ENCODE measurements at regions of chr21 and their contacts with region 1.

Region 1: GRCh38 chr21:36149788-36150711 is 6.6 kb upstream of the DOP1B start:
- DNase-seq: no peak
- ATAC-seq: peak; percentile 77
- H3K4me3 ChIP-seq: no peak overlapping the region
- H3K4me3 Mint-ChIP-seq: peak overlapping the region in 7 of 10 donors; percentile 26 to 75 (median 64)
- H3K27ac ChIP-seq: peak overlapping the region; percentile 18
- H3K27ac Mint-ChIP-seq: peak overlapping the region; percentile 40 to 91 (median 84)
- H3K4me1 ChIP-seq: peaks cover 18 to 35% of the 10 kb centered on the region in 2 donors
- H3K4me1 Mint-ChIP-seq: peaks cover 21 to 59% (median 51%) of the 10 kb centered on the region in 7 donors
- H3K27me3 ChIP-seq: no peaks in the 10 kb centered on the region
- H3K27me3 Mint-ChIP-seq: peaks cover 0 to 7% (median 0%) of the 10 kb centered on the region in 5 donors

Region 2: DNA sequence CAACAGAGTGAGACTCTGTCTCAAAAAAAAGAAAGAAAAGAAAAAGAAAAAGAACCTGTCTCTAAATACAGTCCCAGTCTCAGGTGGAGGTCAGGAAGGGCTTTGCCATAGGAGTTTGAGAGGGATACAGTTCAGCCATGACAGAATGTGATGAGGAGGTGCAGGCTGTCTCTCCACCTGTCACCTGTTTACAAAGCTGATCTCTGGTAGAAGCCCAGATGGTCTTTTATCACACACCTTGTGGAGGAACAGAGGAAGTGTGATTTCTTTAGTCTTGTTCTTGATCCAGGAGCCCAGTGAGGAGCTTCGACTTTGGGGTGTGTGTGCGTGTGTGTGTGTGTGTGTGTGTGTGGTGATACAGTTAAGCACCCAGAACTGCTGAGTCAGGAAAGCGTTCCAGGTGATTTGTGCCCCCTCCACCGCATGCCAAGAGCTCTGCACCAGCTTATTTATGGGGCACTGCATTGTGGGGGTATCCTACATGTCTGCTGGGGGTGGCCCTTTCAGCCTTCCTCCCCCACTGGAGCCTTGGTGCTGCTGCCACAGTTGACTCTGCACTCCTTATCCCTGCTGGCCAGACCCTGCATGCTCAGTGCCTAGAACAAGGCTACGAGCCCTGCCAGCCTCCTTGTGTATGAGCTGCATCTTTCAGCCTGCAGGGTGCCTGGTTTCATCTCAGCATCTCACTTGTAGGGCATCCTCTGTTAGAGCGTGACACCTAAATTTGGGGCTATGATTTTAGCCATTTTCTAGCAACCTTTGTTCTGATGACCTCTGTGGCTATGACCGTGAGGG is 25.9 kb after region 1 on chr21:
- CTCF ChIA-PET with region 1: interaction called, 15 read pairs
- POLR2A ChIA-PET with region 1: interaction called, 7 read pairs
- intact Hi-C with region 1: no loop called
- DNase-seq: peak in 5 of 9 donors; percentile 3 to 33 (median 14)
- ATAC-seq: peak; percentile 30
- H3K4me3 ChIP-seq: no peak overlapping the region
- H3K4me3 Mint-ChIP-seq: peak overlapping the region in 2 of 10 donors; percentile 12 to 16
- H3K27ac ChIP-seq: no peak overlapping the region
- H3K27ac Mint-ChIP-seq: peak overlapping the region in 8 of 9 donors; percentile 42 to 87 (median 84)
- H3K4me1 ChIP-seq: peaks cover 9 to 14% of the 10 kb centered on the region in 2 donors
- H3K4me1 Mint-ChIP-seq: peaks cover 7 to 33% (median 24%) of the 10 kb centered on the region in 7 donors
- H3K27me3 ChIP-seq: no peaks in the 10 kb centered on the region
- H3K27me3 Mint-ChIP-seq: no peaks in the 10 kb centered on the region

Region 3: DNA sequence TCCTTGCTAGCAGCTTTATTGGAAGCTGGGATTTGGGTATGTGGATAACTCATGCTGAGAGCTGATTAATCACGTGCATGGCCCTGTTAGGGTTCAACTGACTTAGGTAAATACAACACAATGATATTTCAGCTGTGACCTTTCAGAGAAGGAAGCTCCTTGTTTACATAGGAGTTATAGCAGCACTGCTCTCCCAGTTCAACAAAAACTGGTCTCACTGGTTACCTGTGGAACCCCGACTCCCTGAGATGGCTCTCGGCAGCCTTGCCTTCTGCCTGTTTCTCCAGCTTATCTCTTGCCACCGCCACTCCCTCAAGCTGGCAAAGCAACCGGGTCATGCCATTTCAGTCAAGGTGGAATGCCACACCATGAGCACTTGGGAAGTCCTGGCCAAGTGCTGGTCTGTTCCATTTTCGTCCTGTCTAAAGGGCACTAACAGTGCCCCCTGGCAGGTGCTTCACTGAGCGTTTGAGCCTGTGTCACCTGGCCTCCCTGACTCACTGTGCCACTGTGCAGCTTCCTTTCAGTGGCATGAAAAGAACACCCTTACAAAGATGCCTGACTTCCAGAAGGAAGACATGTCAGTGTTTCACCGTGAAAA is 38.1 kb after region 1 on chr21:
- CTCF ChIA-PET with region 1: interaction called, 3 read pairs
- POLR2A ChIA-PET with region 1: interaction called, 3 read pairs
- intact Hi-C with region 1: loop called in 1 of 2 experiments (anchors 5 kb)
- DNase-seq: no peak
- ATAC-seq: no peak
- H3K4me3 ChIP-seq: no peak overlapping the region
- H3K4me3 Mint-ChIP-seq: no peak overlapping the region
- H3K27ac ChIP-seq: no peak overlapping the region
- H3K27ac Mint-ChIP-seq: peak overlapping the region in 7 of 9 donors; percentile 1 to 56 (median 23)
- H3K4me1 ChIP-seq: no peaks in the 10 kb centered on the region
- H3K4me1 Mint-ChIP-seq: peaks cover 9 to 22% (median 12%) of the 10 kb centered on the region in 7 donors
- H3K27me3 ChIP-seq: no peaks in the 10 kb centered on the region
- H3K27me3 Mint-ChIP-seq: no peaks in the 10 kb centered on the region

Measured in naive thymus-derived CD4-positive, alpha-beta T cell (primary cell).